Dendritic cell treated with granulocyte-macrophage colony-stimulating factor and Interleukin-4, amounts not matched to agents 40 ng/mL and 50 ng/mL, for 4 days (primary cell): ENCODE measurements at regions of chr1 and their contacts with region 1.

Region 1: DNA sequence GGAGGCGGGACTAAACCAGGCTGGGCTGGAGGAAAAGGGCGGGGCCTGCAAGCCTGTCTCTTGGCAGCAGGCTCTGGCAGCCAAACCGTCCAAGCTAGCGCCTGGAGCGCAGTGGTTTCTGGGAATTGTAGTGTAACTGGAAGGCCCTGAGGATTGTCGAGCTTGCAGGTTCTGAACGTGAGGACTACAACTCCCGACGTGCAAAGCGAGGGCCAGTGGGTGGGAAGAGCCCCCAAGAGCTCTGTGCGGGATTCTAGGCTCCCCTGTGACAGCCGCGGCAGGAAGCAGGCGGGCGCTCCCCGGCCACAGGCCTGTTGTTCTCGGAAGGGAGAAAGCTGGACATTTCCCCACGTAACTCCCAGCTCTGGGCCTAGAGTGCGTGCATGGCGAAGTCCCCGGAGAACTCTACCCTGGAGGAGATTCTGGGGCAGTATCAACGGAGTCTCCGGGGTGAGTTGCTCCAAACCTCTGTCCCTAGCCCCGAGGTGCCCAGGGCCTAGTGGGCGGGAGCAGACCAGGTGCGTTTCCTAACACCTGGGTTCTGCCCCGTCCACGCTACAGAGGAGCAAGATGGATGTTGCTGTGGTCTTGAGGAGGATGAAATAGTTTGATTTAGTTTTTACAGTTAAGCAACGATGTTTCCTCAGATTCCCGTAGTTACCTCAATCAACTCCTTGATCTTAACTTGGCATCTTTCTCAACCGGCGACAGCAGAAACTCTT is at the start of gene SDCCAG8:
- H3K4me3 Mint-ChIP-seq: peak within 1 kb of the TSS; percentile 87
- H3K27ac Mint-ChIP-seq: peak within 1 kb of the TSS; percentile 100
- H3K4me1 Mint-ChIP-seq: peaks cover 32% of the 10 kb centered on the region
- H3K27me3 Mint-ChIP-seq: no peaks in the 10 kb centered on the region

Region 2: GRCh38 chr1:242770366-242770765 is 485.6 kb before region 1 on chr1:
- intact Hi-C with region 1: no loop called
- H3K4me3 Mint-ChIP-seq: no peak overlapping the region
- H3K27ac Mint-ChIP-seq: no peak overlapping the region
- H3K4me1 Mint-ChIP-seq: no peaks in the 10 kb centered on the region
- H3K27me3 Mint-ChIP-seq: no peaks in the 10 kb centered on the region

Region 3: DNA sequence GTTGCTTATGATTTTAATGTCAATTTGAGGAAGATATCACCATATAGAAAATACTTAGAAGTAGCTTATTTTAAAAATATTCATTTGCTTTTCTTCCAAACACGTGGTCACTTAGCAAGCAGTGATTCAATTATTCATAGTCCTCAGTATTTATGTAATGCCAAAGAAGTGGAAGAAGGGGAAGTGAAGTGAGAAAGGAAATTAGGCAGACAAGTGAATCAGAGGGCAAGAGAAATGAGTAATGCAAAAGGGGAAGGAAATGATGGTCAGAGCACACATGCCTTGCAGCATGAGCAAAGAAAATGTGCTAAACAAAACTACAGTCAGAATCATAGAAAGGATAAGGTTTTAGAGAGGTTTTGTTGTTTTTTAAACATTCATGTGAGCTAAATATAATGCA is 31.7 kb after region 1 on chr1:
- intact Hi-C with region 1: loop called (anchors 1 kb)
- H3K4me3 Mint-ChIP-seq: peak overlapping the region; percentile 24
- H3K27ac Mint-ChIP-seq: peak overlapping the region; percentile 99
- H3K4me1 Mint-ChIP-seq: peaks cover 55% of the 10 kb centered on the region
- H3K27me3 Mint-ChIP-seq: no peaks in the 10 kb centered on the region

Region 4: GRCh38 chr1:243312952-243313634 is 57.1 kb after region 1 on chr1:
- intact Hi-C with region 1: loop called (anchors 10 kb)
- H3K4me3 Mint-ChIP-seq: no peak overlapping the region
- H3K27ac Mint-ChIP-seq: peak overlapping the region; percentile 86
- H3K4me1 Mint-ChIP-seq: peaks cover 46% of the 10 kb centered on the region
- H3K27me3 Mint-ChIP-seq: no peaks in the 10 kb centered on the region